ENCODE measurements at regions of chr11 and their contacts with region 1.

Region 1: DNA sequence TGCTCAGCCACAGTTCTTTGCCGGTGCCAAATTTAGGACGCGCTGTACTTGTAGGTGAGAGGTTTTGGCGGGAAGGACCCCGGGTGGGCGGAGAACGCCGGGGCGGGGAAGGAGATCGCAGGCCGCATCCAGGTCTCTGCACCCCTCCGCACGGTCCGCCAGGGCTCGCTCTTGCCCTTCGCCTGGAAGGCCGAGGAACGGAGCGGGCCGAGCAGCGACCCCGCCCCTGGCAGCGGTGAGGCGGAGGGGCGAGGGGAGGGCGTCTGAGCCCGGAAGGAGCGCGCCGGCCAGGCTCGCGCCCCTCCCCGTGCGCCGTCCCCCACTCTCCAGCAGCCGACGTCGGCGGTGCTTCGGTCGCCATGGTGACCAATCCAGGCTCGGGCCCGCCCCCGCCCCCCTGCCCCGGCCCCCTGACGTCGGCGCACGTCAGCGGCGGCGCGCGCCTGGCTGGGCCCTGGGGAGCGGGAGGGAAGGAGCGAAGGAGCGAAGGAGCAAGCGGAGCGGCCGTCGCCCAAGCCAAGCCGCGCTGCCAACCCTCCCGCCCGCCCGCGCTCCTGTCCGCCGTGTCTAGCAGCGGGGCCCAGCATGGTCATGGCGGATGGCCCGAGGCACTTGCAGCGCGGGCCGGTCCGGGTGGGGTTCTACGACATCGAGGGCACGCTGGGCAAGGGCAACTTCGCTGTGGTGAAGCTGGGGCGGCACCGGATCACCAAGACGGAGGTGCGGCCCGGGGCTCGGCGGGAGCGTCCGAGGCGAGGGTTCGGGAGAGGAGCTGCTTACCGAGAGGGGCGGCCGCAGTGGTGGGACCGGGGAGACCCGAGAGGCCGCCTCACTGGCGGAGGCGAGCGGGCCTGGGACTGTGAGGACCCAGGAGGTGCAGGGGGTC is at the start of gene SIK2:
- DNase-seq: peak; percentile 94 to 95
- ATAC-seq: peak; percentile 91
- total RNA-seq, gene SIK2: 22.9 to 23.8 TPM

Region 2: GRCh38 chr11:111526501-111526900 is 75.7 kb before region 1 on chr11:
- intact Hi-C with region 1: no loop called
- DNase-seq: no peak
- ATAC-seq: no peak

Region 3: DNA sequence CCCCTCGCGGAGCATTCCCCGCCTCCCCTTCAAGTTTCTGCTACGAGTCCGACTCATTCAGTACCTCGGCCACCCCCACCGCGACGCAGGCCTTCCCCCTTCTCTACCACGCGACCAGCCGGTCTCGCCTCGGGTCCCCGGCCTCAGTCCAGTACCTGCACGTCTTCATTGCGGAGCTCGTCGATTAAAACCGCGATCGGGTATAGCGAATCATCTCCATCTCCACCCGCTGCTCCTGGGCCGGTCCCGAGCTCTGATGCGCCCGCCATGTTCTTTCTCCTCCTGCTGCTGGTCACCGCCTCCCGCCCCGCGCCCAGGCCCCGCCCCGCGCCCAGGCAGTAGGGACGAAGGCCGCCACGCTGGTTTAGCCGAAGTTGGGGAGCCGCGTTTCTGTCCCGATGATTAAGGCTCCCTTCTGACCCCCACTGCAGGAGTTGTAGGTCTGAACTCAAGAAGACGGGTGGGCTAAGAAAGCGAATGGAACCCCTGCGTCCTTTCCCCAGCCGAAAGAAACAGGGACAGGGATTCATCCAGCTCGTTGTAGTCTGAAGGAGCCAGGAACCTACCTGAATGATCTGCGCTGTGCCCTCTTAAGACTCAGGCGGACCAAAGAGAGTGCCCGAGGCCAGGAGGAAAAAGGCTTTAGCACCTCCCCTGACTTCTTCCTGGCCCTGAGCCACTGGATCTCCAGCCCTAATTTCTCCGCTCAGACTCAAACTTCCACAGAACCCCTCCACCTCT is 164.0 kb after region 1 on chr11 and contains the start of gene PPP2R1B:
- intact Hi-C with region 1: loop called in 1 of 2 experiments (anchors 5 kb)
- DNase-seq: peak; percentile 72 to 83
- ATAC-seq: peak; percentile 94
- total RNA-seq, gene PPP2R1B: 45.3 to 45.8 TPM

Region 4: GRCh38 chr11:111777094-111778046 is 175.1 kb after region 1 on chr11:
- intact Hi-C with region 1: loop called in 1 of 2 experiments (anchors 5 kb)
- DNase-seq: no peak
- ATAC-seq: peak; percentile 76